CD4-positive, alpha-beta T cell (primary cell): ENCODE measurements at regions of chr4 and their contacts with region 1.

Region 1: DNA sequence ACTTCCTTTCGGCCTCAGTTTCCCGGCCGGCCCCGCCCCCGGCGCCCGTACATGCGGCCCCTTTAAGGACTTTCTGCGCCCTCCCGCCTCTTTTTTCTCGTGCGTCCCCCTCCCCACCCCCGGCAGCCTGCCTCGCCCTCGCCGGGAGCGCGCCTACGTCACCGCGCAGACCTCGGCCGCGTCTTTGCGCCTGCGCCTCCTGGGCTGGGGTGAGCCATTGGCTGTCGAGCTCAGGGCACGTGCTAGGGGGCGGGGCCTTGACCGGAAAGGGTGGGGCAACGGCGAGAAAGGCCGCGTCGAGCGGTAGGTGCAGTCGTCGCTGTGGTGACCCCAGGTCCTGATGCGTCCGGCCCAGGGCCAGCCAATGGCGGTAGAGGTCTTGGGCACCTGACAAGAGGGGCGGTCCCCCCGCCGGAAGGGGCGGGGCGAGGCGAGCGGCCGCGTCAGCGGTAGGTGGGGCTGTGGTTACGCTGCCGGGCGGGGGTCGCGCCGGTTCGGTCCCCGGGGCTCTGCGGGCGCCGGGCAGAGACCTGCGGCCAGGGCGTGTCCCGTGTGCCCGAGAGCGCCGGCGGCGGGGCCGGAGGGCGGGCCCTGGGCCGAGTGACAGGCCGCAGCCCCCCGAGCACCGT is at the start of gene UVSSA:
- DNase-seq: peak; percentile 100
- ATAC-seq: peak; percentile 87
- H3K4me3 ChIP-seq: peak within 1 kb of the TSS; percentile 77
- H3K4me3 Mint-ChIP-seq: peak within 1 kb of the TSS; percentile 96
- H3K27ac ChIP-seq: peak within 1 kb of the TSS; percentile 84 to 89
- H3K27ac Mint-ChIP-seq: peak within 1 kb of the TSS; percentile 96
- H3K4me1 ChIP-seq: peaks cover 40% of the 10 kb centered on the region
- H3K4me1 Mint-ChIP-seq: peaks cover 60% of the 10 kb centered on the region
- H3K27me3 ChIP-seq: no peaks in the 10 kb centered on the region
- H3K27me3 Mint-ChIP-seq: no peaks in the 10 kb centered on the region
- CTCF ChIP-seq: no peak
- total RNA-seq, gene UVSSA: 31.1 to 33.1 TPM

Region 2: DNA sequence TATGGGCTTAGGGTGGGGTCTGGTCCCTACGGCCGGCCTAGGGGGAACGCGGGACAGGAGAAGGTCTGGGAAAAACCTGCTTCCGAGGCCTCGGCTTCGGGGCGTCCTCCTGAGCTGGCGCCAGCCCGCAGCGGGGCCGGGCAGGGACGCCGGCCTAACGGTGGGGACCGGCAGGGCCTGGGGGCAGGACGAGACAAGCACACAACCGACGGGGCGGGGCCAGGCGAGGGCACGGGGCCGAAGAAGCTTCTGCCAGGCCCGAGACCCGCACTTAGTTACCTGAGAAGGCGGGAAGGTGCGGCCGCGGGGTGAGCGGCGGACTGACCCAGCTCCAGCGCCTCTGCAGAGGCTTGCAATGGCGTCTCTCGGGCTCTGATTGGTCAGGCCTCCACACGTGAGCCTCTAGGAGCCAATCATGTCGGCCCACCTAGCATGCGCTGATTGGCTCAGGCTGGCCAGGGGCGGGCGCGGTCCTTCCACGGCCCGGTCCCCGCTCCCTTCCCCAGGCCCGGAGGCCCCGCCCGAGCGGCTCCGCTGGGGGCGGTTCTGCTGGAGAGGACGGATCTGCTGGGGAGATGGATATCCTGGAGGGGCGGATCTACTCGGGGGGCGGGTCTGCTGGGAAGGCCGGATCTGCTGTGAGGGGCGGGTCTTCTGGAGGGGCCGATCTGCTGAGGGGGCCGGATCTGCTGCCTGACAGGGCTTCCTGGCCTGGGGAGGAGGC is 565.2 kb before region 1 on chr4:
- CTCF ChIA-PET with region 1: no interaction called
- POLR2A ChIA-PET with region 1: no interaction called
- intact Hi-C with region 1: loop called (anchors 2 to 5 kb)
- DNase-seq: peak; percentile 96 to 99 (median 98)
- ATAC-seq: peak; percentile 91
- H3K4me3 ChIP-seq: peak overlapping the region; percentile 97
- H3K4me3 Mint-ChIP-seq: peak overlapping the region; percentile 97
- H3K27ac ChIP-seq: peak overlapping the region; percentile 80 to 90
- H3K27ac Mint-ChIP-seq: peak overlapping the region; percentile 95
- H3K4me1 ChIP-seq: peaks cover 65% of the 10 kb centered on the region
- H3K4me1 Mint-ChIP-seq: peaks cover 58% of the 10 kb centered on the region
- H3K27me3 ChIP-seq: peaks cover 16 to 32% of the 10 kb centered on the region in 2 experiments
- H3K27me3 Mint-ChIP-seq: peaks cover 23% of the 10 kb centered on the region
- CTCF ChIP-seq: no peak

Region 3: GRCh38 chr4:1130316-1131186 is 216.3 kb before region 1 on chr4:
- CTCF ChIA-PET with region 1: no interaction called
- POLR2A ChIA-PET with region 1: interaction called, 4 read pairs
- intact Hi-C with region 1: loop called (anchors 1 kb)
- DNase-seq: peak; percentile 64 to 89 (median 72)
- ATAC-seq: peak; percentile 100
- H3K4me3 ChIP-seq: no peak overlapping the region
- H3K4me3 Mint-ChIP-seq: no peak overlapping the region
- H3K27ac ChIP-seq: no peak overlapping the region
- H3K27ac Mint-ChIP-seq: no peak overlapping the region
- H3K4me1 ChIP-seq: peaks cover 3% of the 10 kb centered on the region
- H3K4me1 Mint-ChIP-seq: peaks cover 5% of the 10 kb centered on the region
- H3K27me3 ChIP-seq: peaks cover 0 to 5% of the 10 kb centered on the region in 2 experiments
- H3K27me3 Mint-ChIP-seq: peaks cover 8% of the 10 kb centered on the region
- CTCF ChIP-seq: peak; percentile 99

Region 4: DNA sequence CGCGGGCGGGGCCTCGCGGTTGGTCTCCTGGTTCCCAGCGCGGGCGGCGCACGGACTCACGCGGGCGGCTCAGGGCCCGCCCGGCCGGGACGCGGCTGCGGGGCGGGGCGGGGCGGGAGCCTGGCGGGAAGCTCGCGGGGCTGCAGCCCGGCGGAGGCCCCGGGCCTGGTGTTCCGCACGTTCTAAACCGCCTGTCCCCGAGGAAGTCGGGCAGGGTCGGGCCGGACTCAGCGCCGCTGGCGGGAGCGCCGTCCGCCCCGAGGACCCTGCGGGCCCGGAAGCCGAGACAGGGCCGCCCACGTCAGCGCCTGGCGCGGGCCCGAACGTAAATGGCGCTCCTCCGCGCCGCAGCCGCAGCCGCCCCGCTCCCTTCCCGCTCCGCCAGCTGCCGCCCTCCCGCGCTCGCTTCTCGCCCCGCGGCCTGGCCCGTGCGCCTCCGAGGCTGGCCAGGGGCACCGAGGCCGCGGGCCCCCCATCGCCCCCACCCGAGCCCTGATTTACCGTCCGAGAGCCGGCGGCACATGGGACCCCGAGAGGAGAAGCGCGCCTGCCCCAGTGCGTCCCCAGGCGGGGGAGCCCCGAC is 97.7 kb before region 1 on chr4:
- CTCF ChIA-PET with region 1: interaction called, 6 read pairs
- POLR2A ChIA-PET with region 1: interaction called, 178 read pairs
- intact Hi-C with region 1: loop called (anchors 1 kb)
- DNase-seq: peak; percentile 72 to 97 (median 83)
- ATAC-seq: peak; percentile 68
- H3K4me3 ChIP-seq: peak overlapping the region; percentile 86
- H3K4me3 Mint-ChIP-seq: peak overlapping the region; percentile 97
- H3K27ac ChIP-seq: peak overlapping the region; percentile 89 to 92
- H3K27ac Mint-ChIP-seq: peak overlapping the region; percentile 98
- H3K4me1 ChIP-seq: peaks cover 79% of the 10 kb centered on the region
- H3K4me1 Mint-ChIP-seq: peaks cover 69% of the 10 kb centered on the region
- H3K27me3 ChIP-seq: no peaks in the 10 kb centered on the region
- H3K27me3 Mint-ChIP-seq: no peaks in the 10 kb centered on the region
- CTCF ChIP-seq: no peak

Region 5: DNA sequence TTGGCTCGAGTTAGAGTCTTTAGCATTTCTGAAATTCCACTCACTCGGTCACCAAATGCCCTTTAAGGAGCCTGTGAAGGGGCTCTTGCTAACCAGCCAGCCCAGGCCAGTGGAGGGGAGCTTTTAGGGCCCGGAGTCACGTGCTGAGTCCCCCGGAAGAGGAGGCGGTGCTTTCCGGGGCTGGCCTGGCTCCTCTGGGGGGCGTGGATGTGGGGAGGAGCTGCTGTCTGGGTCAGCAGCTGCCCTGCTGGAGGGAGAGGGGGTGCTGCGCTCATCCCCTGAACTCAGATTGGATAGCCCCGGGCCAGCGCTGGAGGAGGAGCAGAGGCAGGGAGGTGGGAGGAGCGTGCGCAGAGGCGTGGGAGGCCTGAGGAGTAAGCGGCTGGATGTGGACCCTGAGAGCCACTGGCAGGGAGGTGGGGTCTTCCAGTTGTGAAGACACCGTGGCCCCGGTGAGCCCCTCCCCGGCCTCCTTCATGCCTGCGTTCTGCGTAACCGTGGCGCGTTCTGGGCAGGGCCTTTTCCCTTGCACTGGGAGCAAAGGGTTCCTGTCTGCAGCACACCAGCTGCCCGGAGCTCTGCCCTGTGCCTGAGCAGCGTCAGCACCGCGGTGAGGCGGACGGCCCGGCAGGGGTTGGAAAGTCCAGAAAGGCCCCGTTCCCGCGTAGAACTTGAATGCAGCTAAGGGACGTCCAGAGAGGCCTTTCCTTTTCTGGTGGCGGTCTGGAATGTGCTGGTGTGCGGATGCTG is 37.5 kb before region 1 on chr4:
- CTCF ChIA-PET with region 1: no interaction called
- POLR2A ChIA-PET with region 1: interaction called, 9 read pairs
- intact Hi-C with region 1: loop called in 1 of 2 experiments (anchors 5 kb)
- DNase-seq: peak in 12 of 14 experiments; percentile 32 to 81 (median 52)
- ATAC-seq: peak; percentile 51
- H3K4me3 ChIP-seq: peak overlapping the region; percentile 44
- H3K4me3 Mint-ChIP-seq: peak overlapping the region; percentile 76
- H3K27ac ChIP-seq: peak overlapping the region in 1 of 2 donors; percentile 39
- H3K27ac Mint-ChIP-seq: peak overlapping the region; percentile 82
- H3K4me1 ChIP-seq: peaks cover 69% of the 10 kb centered on the region
- H3K4me1 Mint-ChIP-seq: peaks cover 65% of the 10 kb centered on the region
- H3K27me3 ChIP-seq: no peaks in the 10 kb centered on the region
- H3K27me3 Mint-ChIP-seq: no peaks in the 10 kb centered on the region
- CTCF ChIP-seq: no peak

Region 6: DNA sequence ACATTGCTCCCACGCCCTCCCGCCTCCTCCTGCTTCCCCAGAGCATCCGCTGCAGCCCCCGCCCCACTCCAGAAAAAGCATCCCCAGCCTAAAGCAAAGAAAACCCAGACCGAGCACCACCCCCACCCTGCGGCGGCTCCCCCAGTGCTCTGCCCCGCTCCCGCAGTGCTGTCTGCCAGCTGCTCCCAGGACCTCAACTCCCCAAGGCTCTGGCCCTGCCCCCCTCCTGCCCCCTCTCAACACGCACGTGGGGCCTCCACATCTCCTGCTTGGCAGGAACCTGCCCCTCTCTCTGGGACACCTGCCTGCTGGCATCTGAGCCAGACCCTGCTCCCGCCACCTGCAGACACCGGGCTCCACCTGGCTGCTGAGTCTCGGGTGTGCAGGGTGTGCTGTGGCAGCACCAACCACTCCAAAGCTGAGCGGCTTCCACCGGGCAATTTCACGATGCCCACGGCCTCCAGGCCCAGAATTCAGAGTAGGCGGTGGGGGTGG is 257.9 kb after region 1 on chr4:
- CTCF ChIA-PET with region 1: no interaction called
- POLR2A ChIA-PET with region 1: interaction called, 15 read pairs
- intact Hi-C with region 1: no loop called
- DNase-seq: peak in 11 of 14 experiments; percentile 39 to 87 (median 63)
- ATAC-seq: peak; percentile 80
- H3K4me3 ChIP-seq: peak overlapping the region; percentile 43
- H3K4me3 Mint-ChIP-seq: peak overlapping the region; percentile 74
- H3K27ac ChIP-seq: peak overlapping the region in 1 of 2 donors; percentile 29
- H3K27ac Mint-ChIP-seq: peak overlapping the region; percentile 85
- H3K4me1 ChIP-seq: peaks cover 46% of the 10 kb centered on the region
- H3K4me1 Mint-ChIP-seq: peaks cover 21% of the 10 kb centered on the region
- H3K27me3 ChIP-seq: no peaks in the 10 kb centered on the region
- H3K27me3 Mint-ChIP-seq: no peaks in the 10 kb centered on the region
- CTCF ChIP-seq: peak; percentile 52

Region 7: GRCh38 chr4:1856042-1856788 is 509.3 kb after region 1 on chr4 and contains the start of gene LETM1:
- CTCF ChIA-PET with region 1: no interaction called
- POLR2A ChIA-PET with region 1: no interaction called
- intact Hi-C with region 1: loop called in 1 of 2 experiments (anchors 2 kb)
- DNase-seq: peak; percentile 81 to 97 (median 91)
- ATAC-seq: peak; percentile 97
- H3K4me3 ChIP-seq: peak within 1 kb of the TSS; percentile 75
- H3K4me3 Mint-ChIP-seq: peak within 1 kb of the TSS; percentile 94
- H3K27ac ChIP-seq: peak within 1 kb of the TSS in 1 of 2 donors; percentile 5
- H3K27ac Mint-ChIP-seq: peak within 1 kb of the TSS; percentile 76
- H3K4me1 ChIP-seq: peaks cover 32% of the 10 kb centered on the region
- H3K4me1 Mint-ChIP-seq: peaks cover 40% of the 10 kb centered on the region
- H3K27me3 ChIP-seq: no peaks in the 10 kb centered on the region
- H3K27me3 Mint-ChIP-seq: no peaks in the 10 kb centered on the region
- CTCF ChIP-seq: no peak
- total RNA-seq, gene LETM1: 21.2 to 25.2 TPM